ENCODE measurements at regions of chr5 and their contacts with region 1.

Region 1: GRCh38 chr5:152142840-152143469 is 218.3 kb upstream of the GLRA1 start:
- DNase-seq: peak; percentile 60
- H3K4me3 ChIP-seq: no peak overlapping the region
- H3K27ac ChIP-seq: no peak overlapping the region
- H3K4me1 ChIP-seq: no peaks in the 10 kb centered on the region
- H3K27me3 ChIP-seq: no peaks in the 10 kb centered on the region; the same call in 1 of the 2 replicates

Region 2: DNA sequence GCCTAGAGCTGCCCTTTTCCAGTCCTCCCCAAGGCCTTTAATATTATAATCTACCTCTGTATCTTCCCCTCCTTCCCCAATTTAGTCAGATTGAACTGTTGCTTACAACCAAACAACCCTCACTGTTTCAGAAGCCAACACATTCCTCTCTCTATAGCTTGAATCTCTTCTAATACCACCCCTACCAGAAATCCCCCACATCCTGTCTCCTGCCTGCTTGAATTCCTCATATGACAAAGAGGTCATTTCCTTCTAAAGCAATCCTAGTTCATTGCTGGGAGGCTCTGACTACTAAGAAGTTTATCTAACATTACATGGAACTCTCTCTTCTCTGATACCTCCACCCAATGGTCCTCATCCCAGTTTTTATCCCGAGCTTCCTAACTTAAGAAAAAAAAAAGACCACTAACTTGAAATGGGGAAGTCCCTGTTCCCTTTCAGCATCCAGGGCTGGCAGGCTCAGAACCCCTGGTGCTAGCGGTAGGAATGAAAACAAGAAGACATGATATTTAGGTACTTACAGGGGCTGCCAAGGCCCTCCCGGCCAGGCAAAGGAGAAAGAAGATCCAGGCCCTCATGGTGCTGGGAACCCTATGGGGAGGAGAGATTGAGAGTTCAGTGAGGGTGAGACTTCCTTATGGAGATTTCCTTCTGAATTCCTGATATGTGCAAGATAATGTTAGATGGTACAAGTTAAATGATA is 467.2 kb before region 1 on chr5:
- in situ Hi-C with region 1: no loop called
- DNase-seq: peak; percentile 55
- H3K4me3 ChIP-seq: peak overlapping the region; percentile 95
- H3K27ac ChIP-seq: peak overlapping the region; percentile 99
- H3K4me1 ChIP-seq: peaks cover 98% of the 10 kb centered on the region
- H3K27me3 ChIP-seq: no peaks in the 10 kb centered on the region

Region 3: DNA sequence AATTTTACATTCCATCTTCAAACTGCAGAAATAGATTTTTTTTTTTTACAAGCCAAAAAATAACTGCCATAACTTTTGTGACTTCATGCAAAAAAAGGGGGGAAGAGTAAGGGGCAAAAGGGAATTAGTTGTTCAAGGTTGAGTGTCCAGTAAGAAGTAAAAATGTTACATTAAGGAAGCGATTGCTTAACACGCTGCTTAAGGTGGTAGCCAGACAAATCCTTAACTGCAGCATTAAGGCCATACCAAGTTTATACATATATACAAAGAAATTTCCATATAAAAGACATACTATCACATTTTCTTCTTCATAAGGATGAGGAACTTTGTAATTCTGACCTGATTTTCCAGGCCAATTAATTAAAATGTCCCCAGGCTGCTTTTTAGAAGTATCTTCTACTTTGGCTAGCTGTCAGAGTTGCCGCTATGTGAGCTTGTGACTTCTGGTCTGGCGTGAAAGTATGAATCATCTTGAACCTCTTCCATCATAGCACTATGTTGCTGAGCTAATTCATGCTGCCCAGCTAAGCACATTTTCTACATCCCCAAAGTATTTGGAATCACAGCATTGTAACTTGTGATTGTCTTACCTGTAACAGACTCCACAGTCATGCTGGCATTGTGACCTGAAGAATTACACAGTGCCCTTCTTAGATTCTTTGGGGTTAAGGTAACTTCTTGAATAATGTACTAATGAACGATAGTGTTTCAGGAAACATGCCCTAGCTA is 331.2 kb before region 1 on chr5:
- in situ Hi-C with region 1: no loop called
- DNase-seq: peak; percentile 84
- H3K4me3 ChIP-seq: no peak overlapping the region
- H3K27ac ChIP-seq: peak overlapping the region; percentile 37
- H3K4me1 ChIP-seq: peaks cover 36% of the 10 kb centered on the region
- H3K27me3 ChIP-seq: no peaks in the 10 kb centered on the region

Region 4: GRCh38 chr5:151825445-151825844 is 317.5 kb before region 1 on chr5:
- in situ Hi-C with region 1: loop called (anchors 10 kb)
- DNase-seq: peak; percentile 78
- H3K4me3 ChIP-seq: no peak overlapping the region
- H3K27ac ChIP-seq: no peak overlapping the region
- H3K4me1 ChIP-seq: no peaks in the 10 kb centered on the region
- H3K27me3 ChIP-seq: no peaks in the 10 kb centered on the region

Measured in GM23248 (cell line).